B cell (primary cell): ENCODE measurements at regions of chr20 and their contacts with region 1.

Region 1: GRCh38 chr20:53578492-53579222 is 15.0 kb downstream of the ZNF217 start:
- DNase-seq: peak; percentile 91
- ATAC-seq: peak; percentile 62
- H3K4me3 ChIP-seq: peak overlapping the region in 1 of 5 experiments; percentile 45
- H3K4me3 Mint-ChIP-seq: peak overlapping the region; percentile 73
- H3K27ac ChIP-seq: peak overlapping the region; percentile 54 to 77
- H3K27ac Mint-ChIP-seq: peak overlapping the region; percentile 93
- H3K4me1 ChIP-seq: peaks cover 53 to 58% of the 10 kb centered on the region in 2 donors
- H3K4me1 Mint-ChIP-seq: peaks cover 54% of the 10 kb centered on the region
- H3K27me3 ChIP-seq: no peaks in the 10 kb centered on the region
- H3K27me3 Mint-ChIP-seq: no peaks in the 10 kb centered on the region
- CTCF ChIP-seq: peak; percentile 94

Region 2: GRCh38 chr20:53480913-53481312 is 97.7 kb before region 1 on chr20:
- CTCF ChIA-PET with region 1: no interaction called
- POLR2A ChIA-PET with region 1: no interaction called
- intact Hi-C with region 1: no loop called
- DNase-seq: no peak
- ATAC-seq: no peak
- H3K4me3 ChIP-seq: no peak overlapping the region
- H3K4me3 Mint-ChIP-seq: no peak overlapping the region
- H3K27ac ChIP-seq: no peak overlapping the region
- H3K27ac Mint-ChIP-seq: no peak overlapping the region
- H3K4me1 ChIP-seq: no peaks in the 10 kb centered on the region
- H3K4me1 Mint-ChIP-seq: no peaks in the 10 kb centered on the region
- H3K27me3 ChIP-seq: no peaks in the 10 kb centered on the region
- H3K27me3 Mint-ChIP-seq: no peaks in the 10 kb centered on the region
- CTCF ChIP-seq: no peak

Region 3: DNA sequence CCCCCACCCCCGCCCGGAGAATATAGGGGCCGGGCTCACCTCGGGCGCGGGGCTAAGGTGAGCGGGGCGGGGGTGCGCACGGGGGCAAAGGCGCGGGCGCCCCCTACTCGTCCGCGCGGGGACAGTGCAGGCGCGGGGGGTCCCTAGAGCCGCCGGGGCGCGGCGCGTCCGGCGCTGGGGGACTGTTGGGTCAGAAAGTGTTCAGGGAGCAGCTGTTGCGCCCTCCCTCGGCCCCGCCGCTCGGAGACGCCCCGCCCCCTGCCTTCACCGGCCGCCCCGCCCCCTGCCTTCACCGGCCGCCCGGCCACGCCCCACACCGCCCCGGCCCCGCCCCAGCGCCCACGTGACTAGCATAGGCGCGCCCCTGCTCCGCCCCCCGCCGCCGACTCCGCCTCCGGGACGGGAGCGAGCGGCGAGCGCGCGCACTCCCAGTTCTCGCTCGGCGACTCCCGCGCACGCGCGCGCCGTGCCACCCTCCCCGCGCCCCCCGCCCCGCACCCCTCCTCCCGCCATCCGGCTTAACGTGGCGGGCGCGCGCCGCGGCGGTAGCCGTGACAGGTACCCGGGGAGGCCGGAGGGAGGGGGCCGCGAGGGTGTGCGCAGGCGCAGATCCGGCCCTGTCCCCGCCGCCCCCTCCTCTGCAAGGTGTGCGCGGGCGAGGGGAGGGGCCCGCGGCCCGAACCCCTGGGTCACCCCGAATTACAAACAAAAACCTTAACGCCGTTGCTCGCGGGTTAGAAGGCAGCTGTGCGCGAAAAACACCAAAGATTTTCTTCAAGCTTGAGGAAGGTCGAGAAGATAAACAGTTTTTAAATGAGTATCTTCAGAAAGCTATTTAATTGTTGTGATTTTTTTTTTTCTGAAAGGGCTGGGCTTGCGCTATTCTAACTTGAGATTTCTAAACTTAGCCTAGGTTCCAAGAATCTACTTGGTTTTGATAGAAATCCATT is 15.7 kb after region 1 on chr20:
- CTCF ChIA-PET with region 1: interaction called, 9 read pairs
- POLR2A ChIA-PET with region 1: interaction called, 5 read pairs
- intact Hi-C with region 1: loop called (anchors 2 kb)
- DNase-seq: peak; percentile 95
- ATAC-seq: peak; percentile 70
- H3K4me3 ChIP-seq: peak overlapping the region; percentile 52 to 91 (median 85)
- H3K4me3 Mint-ChIP-seq: peak overlapping the region; percentile 92
- H3K27ac ChIP-seq: peak overlapping the region; percentile 92 to 96
- H3K27ac Mint-ChIP-seq: peak overlapping the region; percentile 96
- H3K4me1 ChIP-seq: peaks cover 26 to 27% of the 10 kb centered on the region in 2 donors
- H3K4me1 Mint-ChIP-seq: peaks cover 52% of the 10 kb centered on the region
- H3K27me3 ChIP-seq: no peaks in the 10 kb centered on the region
- H3K27me3 Mint-ChIP-seq: no peaks in the 10 kb centered on the region
- CTCF ChIP-seq: peak; percentile 14

Region 4: GRCh38 chr20:53884859-53885541 is 306.3 kb after region 1 on chr20:
- CTCF ChIA-PET with region 1: no interaction called
- POLR2A ChIA-PET with region 1: no interaction called
- intact Hi-C with region 1: no loop called
- DNase-seq: no peak
- ATAC-seq: no peak
- H3K4me3 ChIP-seq: no peak overlapping the region
- H3K4me3 Mint-ChIP-seq: no peak overlapping the region
- H3K27ac ChIP-seq: no peak overlapping the region
- H3K27ac Mint-ChIP-seq: no peak overlapping the region
- H3K4me1 ChIP-seq: peaks cover 0 to 4% of the 10 kb centered on the region in 2 donors
- H3K4me1 Mint-ChIP-seq: peaks cover 2% of the 10 kb centered on the region
- H3K27me3 ChIP-seq: no peaks in the 10 kb centered on the region
- H3K27me3 Mint-ChIP-seq: no peaks in the 10 kb centered on the region
- CTCF ChIP-seq: no peak

Region 5: GRCh38 chr20:53934421-53935343 is 356.0 kb after region 1 on chr20:
- CTCF ChIA-PET with region 1: interaction called, 137 read pairs
- POLR2A ChIA-PET with region 1: no interaction called
- intact Hi-C with region 1: no loop called
- DNase-seq: peak; percentile 45
- ATAC-seq: peak; percentile 60
- H3K4me3 ChIP-seq: peak overlapping the region in 3 of 5 experiments; percentile 1 to 11 (median 4)
- H3K4me3 Mint-ChIP-seq: peak overlapping the region; percentile 76
- H3K27ac ChIP-seq: peak overlapping the region; percentile 67 to 74
- H3K27ac Mint-ChIP-seq: peak overlapping the region; percentile 84
- H3K4me1 ChIP-seq: peaks cover 60 to 72% of the 10 kb centered on the region in 2 donors
- H3K4me1 Mint-ChIP-seq: peaks cover 84% of the 10 kb centered on the region
- H3K27me3 ChIP-seq: no peaks in the 10 kb centered on the region
- H3K27me3 Mint-ChIP-seq: no peaks in the 10 kb centered on the region
- CTCF ChIP-seq: no peak

Region 6: DNA sequence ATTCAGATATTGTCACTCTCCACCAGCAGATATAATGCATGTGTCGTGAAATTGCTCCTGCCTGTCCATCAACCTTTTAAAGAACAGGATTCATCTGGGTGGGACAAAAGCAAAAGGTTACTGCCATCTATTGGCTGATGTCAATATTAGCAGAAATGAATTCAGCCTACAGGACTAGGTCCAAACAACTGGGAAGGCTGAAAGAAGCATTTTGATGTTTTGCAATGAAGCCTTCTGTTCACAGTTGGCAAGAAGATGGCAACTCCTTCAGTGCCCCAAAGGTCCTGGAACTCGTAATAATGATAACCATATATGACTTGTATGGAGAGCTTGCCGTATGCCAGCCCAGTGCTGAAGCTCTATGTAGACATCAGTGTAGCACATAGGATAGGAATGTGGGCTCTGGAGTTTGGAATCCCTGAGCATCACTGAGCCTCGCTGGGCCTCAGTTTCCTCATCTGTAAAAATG is 484.2 kb after region 1 on chr20:
- CTCF ChIA-PET with region 1: interaction called, 5 read pairs
- POLR2A ChIA-PET with region 1: no interaction called
- intact Hi-C with region 1: loop called (anchors 1 kb)
- DNase-seq: peak; percentile 56
- ATAC-seq: no peak
- H3K4me3 ChIP-seq: no peak overlapping the region
- H3K4me3 Mint-ChIP-seq: no peak overlapping the region
- H3K27ac ChIP-seq: no peak overlapping the region
- H3K27ac Mint-ChIP-seq: no peak overlapping the region
- H3K4me1 ChIP-seq: peaks cover 0 to 26% of the 10 kb centered on the region in 2 donors
- H3K4me1 Mint-ChIP-seq: peaks cover 31% of the 10 kb centered on the region
- H3K27me3 ChIP-seq: no peaks in the 10 kb centered on the region
- H3K27me3 Mint-ChIP-seq: no peaks in the 10 kb centered on the region
- CTCF ChIP-seq: peak; percentile 73

Region 7: GRCh38 chr20:55036565-55036964 is 1457.9 kb after region 1 on chr20:
- CTCF ChIA-PET with region 1: no interaction called
- POLR2A ChIA-PET with region 1: no interaction called
- intact Hi-C with region 1: no loop called
- DNase-seq: no peak
- ATAC-seq: no peak
- H3K4me3 ChIP-seq: no peak overlapping the region
- H3K4me3 Mint-ChIP-seq: no peak overlapping the region
- H3K27ac ChIP-seq: no peak overlapping the region
- H3K27ac Mint-ChIP-seq: no peak overlapping the region
- H3K4me1 ChIP-seq: no peaks in the 10 kb centered on the region
- H3K4me1 Mint-ChIP-seq: no peaks in the 10 kb centered on the region
- H3K27me3 ChIP-seq: no peaks in the 10 kb centered on the region
- H3K27me3 Mint-ChIP-seq: no peaks in the 10 kb centered on the region
- CTCF ChIP-seq: no peak